ENCODE measurements at regions of chr7 and their contacts with region 1.

Region 1: DNA sequence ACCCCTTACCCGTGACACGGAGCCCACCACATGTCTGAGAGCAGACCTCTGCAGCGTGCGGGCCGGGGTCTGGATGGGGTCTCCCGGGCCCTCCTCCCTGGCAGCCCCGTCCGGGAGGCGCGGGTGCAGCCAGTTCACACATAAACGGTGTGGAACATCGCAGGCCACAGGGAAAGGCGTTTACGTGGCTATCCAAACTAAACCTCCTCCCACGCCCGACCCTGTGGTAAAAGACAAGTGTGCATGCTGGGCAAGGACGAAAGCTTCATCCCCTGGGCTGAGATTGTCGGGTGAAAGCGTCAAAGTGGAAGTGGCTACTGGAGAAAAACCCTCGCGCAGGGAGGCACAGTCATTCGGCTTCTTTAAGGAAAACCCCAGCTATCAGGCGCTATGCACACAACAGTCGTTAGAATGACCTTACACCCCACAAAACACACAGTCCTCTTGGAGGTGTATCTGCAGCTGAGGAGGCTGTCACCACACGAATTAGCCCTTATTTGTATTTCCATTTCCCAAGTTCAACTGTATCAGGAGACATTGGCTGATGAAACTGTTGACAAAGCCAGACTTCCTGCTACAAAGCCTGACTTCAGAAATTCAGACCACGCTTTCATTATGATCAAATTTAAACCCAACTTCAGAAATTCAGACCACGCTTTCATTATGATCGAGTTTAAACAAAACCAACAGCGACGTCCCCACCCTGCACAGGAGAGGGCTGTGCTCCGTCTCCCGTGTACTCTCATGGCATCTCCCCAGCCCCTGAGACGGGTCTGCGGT is 15.3 kb downstream of the GPER1 start:
- DNase-seq: peak in 1 of 2 donors; percentile 27
- ATAC-seq: no peak
- H3K4me3 ChIP-seq: no peak overlapping the region
- H3K27ac ChIP-seq: peak overlapping the region; percentile 46
- H3K4me1 ChIP-seq: peaks cover 16% of the 10 kb centered on the region
- H3K27me3 ChIP-seq: no peaks in the 10 kb centered on the region
- CTCF ChIP-seq: no peak

Region 2: GRCh38 chr7:1078985-1079384 is 24.2 kb before region 1 on chr7:
- intact Hi-C with region 1: loop called in 1 of 2 experiments (anchors 1 kb)
- DNase-seq: no peak
- ATAC-seq: no peak
- H3K4me3 ChIP-seq: no peak overlapping the region
- H3K27ac ChIP-seq: no peak overlapping the region
- H3K4me1 ChIP-seq: no peaks in the 10 kb centered on the region
- H3K27me3 ChIP-seq: no peaks in the 10 kb centered on the region
- CTCF ChIP-seq: no peak

Region 3: GRCh38 chr7:1090236-1090635 is 13.0 kb before region 1 on chr7:
- intact Hi-C with region 1: no loop called
- DNase-seq: no peak
- ATAC-seq: no peak
- H3K4me3 ChIP-seq: no peak overlapping the region
- H3K27ac ChIP-seq: no peak overlapping the region
- H3K4me1 ChIP-seq: peaks cover 12% of the 10 kb centered on the region
- H3K27me3 ChIP-seq: no peaks in the 10 kb centered on the region
- CTCF ChIP-seq: no peak

Region 4: GRCh38 chr7:1175967-1176851 is 73.0 kb after region 1 on chr7:
- intact Hi-C with region 1: no loop called
- DNase-seq: peak; percentile 81 to 90
- ATAC-seq: peak; percentile 83 to 96 (median 89)
- H3K4me3 ChIP-seq: peak overlapping the region; percentile 53
- H3K27ac ChIP-seq: no peak overlapping the region
- H3K4me1 ChIP-seq: no peaks in the 10 kb centered on the region
- H3K27me3 ChIP-seq: peaks cover 0 to 17% (median 2%) of the 10 kb centered on the region in 3 donors
- CTCF ChIP-seq: peak; percentile 89